Natural killer cell (primary cell): ENCODE measurements at regions of chr2 and their contacts with region 1.

Region 1: DNA sequence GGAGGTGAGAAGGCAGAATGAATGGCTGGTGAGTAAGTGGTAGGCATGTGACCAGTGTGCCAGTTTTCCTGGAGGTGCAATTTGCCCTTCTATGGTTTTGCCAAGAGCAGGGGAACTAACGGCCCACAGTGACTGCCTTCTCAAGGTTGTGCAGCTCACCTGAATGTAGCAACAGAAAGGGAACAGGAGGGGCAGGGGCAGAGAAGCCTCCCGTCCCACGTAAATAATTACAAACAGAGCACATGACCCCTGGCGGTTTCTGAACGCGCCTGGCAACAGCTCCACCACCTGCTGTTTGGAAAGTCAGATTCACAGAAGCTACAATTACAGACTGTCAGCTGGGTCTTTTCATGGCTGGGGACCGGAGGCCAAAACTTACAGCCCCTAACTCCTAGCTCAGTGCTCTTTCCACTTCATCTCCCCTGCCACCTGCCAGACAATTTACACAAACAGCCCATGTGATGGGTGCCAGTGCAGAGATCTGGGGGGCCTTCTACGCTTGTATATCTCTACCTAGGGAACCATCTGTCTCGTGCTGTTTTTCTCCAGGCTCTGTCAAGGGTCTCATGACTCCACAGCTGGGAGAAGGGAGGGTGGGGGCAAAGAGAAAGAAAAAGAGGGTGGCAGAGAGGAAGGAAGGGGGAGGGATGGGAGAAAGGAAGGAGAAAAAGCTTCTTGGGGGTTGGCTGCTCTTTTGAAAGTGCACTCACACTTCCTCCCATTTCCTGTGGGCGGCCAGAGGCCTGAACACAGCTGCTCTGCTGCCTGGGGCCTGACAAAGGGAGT is 69.6 kb downstream of the POLR1A start:
- DNase-seq: peak; percentile 57 to 90
- ATAC-seq: peak; percentile 33 to 55 (median 50)
- H3K4me3 ChIP-seq: peak overlapping the region; percentile 10
- H3K4me3 Mint-ChIP-seq: peak overlapping the region; percentile 92
- H3K27ac ChIP-seq: peak overlapping the region; percentile 98
- H3K27ac Mint-ChIP-seq: peak overlapping the region; percentile 98 to 99
- H3K4me1 ChIP-seq: peaks cover 68% of the 10 kb centered on the region
- H3K4me1 Mint-ChIP-seq: peaks cover 52 to 67% of the 10 kb centered on the region in 2 donors
- H3K27me3 ChIP-seq: no peaks in the 10 kb centered on the region
- H3K27me3 Mint-ChIP-seq: no peaks in the 10 kb centered on the region
- CTCF ChIP-seq: no peak

Region 2: GRCh38 chr2:85694052-85695025 is 341.7 kb before region 1 on chr2 and contains the start of gene GNLY:
- intact Hi-C with region 1: loop called (anchors 5 kb)
- DNase-seq: peak; percentile 53 to 77
- ATAC-seq: peak; percentile 57 to 87 (median 79)
- H3K4me3 ChIP-seq: peak within 1 kb of the TSS; percentile 76
- H3K4me3 Mint-ChIP-seq: peak within 1 kb of the TSS; percentile 97
- H3K27ac ChIP-seq: peak within 1 kb of the TSS; percentile 85
- H3K27ac Mint-ChIP-seq: peak within 1 kb of the TSS; percentile 95 to 96
- H3K4me1 ChIP-seq: peaks cover 67% of the 10 kb centered on the region
- H3K4me1 Mint-ChIP-seq: peaks cover 74 to 80% of the 10 kb centered on the region in 2 donors
- H3K27me3 ChIP-seq: no peaks in the 10 kb centered on the region
- H3K27me3 Mint-ChIP-seq: no peaks in the 10 kb centered on the region
- CTCF ChIP-seq: no peak
- total RNA-seq, gene GNLY: 4,938 to 8,199 (median 6,542) TPM

Region 3: GRCh38 chr2:85826990-85827878 is 208.8 kb before region 1 on chr2:
- intact Hi-C with region 1: loop called (anchors 2 kb)
- DNase-seq: peak; percentile 83 to 90
- ATAC-seq: peak; percentile 94 to 100 (median 99)
- H3K4me3 ChIP-seq: no peak overlapping the region
- H3K4me3 Mint-ChIP-seq: no peak overlapping the region
- H3K27ac ChIP-seq: no peak overlapping the region
- H3K27ac Mint-ChIP-seq: peak overlapping the region; percentile 16 to 80
- H3K4me1 ChIP-seq: peaks cover 12% of the 10 kb centered on the region
- H3K4me1 Mint-ChIP-seq: peaks cover 14 to 21% of the 10 kb centered on the region in 2 donors
- H3K27me3 ChIP-seq: no peaks in the 10 kb centered on the region
- H3K27me3 Mint-ChIP-seq: peaks cover 0 to 6% of the 10 kb centered on the region in 2 donors
- CTCF ChIP-seq: peak; percentile 93

Region 4: GRCh38 chr2:85852937-85853498 is 183.1 kb before region 1 on chr2:
- intact Hi-C with region 1: loop called (anchors 1 kb)
- DNase-seq: peak; percentile 71 to 89
- ATAC-seq: peak; percentile 81 to 92 (median 86)
- H3K4me3 ChIP-seq: peak overlapping the region; percentile 12
- H3K4me3 Mint-ChIP-seq: peak overlapping the region; percentile 91
- H3K27ac ChIP-seq: peak overlapping the region; percentile 100
- H3K27ac Mint-ChIP-seq: peak overlapping the region; percentile 94 to 99
- H3K4me1 ChIP-seq: peaks cover 61% of the 10 kb centered on the region
- H3K4me1 Mint-ChIP-seq: peaks cover 66 to 67% of the 10 kb centered on the region in 2 donors
- H3K27me3 ChIP-seq: no peaks in the 10 kb centered on the region
- H3K27me3 Mint-ChIP-seq: no peaks in the 10 kb centered on the region
- CTCF ChIP-seq: no peak

Region 5: GRCh38 chr2:85999061-85999831 is 36.8 kb before region 1 on chr2:
- intact Hi-C with region 1: loop called (anchors 5 kb)
- DNase-seq: peak in 1 of 2 donors; percentile 69
- ATAC-seq: peak; percentile 73 to 92 (median 85)
- H3K4me3 ChIP-seq: no peak overlapping the region
- H3K4me3 Mint-ChIP-seq: peak overlapping the region; percentile 13
- H3K27ac ChIP-seq: peak overlapping the region; percentile 72
- H3K27ac Mint-ChIP-seq: peak overlapping the region; percentile 83 to 88
- H3K4me1 ChIP-seq: peaks cover 63% of the 10 kb centered on the region
- H3K4me1 Mint-ChIP-seq: peaks cover 34 to 57% of the 10 kb centered on the region in 2 donors
- H3K27me3 ChIP-seq: no peaks in the 10 kb centered on the region
- H3K27me3 Mint-ChIP-seq: no peaks in the 10 kb centered on the region
- CTCF ChIP-seq: no peak

Region 6: DNA sequence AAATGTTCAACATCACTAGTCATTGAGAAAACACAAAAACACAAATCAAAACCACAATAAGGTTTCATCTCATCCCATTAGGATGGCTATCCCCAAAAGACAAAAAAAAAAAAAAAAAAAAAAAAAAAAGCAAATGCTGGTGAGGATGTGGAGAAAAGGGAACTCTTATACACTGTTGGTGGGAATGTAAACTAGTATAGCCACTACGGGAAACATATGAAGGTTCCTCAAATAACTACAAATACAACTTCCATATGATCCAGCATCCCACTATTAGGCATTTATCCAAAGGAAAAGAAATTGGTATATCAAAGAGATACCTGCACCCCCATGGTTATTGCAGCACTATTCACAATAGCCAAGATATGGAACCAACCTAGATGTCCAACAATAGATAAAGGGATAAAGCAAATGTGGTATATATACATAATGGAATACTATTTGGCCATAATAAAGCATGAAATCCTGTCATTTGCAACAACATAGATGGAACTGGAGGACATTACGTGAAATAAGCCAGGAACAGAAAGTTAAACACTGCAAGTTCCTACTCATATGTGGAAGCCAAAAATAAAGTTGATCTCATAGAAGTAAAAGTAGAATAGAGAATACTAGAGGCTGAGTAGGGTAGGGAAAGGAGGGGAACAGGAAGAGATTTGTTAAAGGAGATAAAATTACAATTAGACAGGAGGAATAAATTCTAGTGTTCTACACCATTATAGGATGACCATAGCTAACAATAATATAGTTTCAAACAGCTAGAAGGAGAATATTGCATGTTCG is 61.2 kb after region 1 on chr2:
- intact Hi-C with region 1: no loop called
- DNase-seq: no peak
- ATAC-seq: no peak
- H3K4me3 ChIP-seq: no peak overlapping the region
- H3K4me3 Mint-ChIP-seq: no peak overlapping the region
- H3K27ac ChIP-seq: no peak overlapping the region
- H3K27ac Mint-ChIP-seq: no peak overlapping the region
- H3K4me1 ChIP-seq: no peaks in the 10 kb centered on the region
- H3K4me1 Mint-ChIP-seq: peaks cover 7 to 10% of the 10 kb centered on the region in 2 donors
- H3K27me3 ChIP-seq: no peaks in the 10 kb centered on the region
- H3K27me3 Mint-ChIP-seq: no peaks in the 10 kb centered on the region
- CTCF ChIP-seq: no peak